Panc1 (cell line): ENCODE measurements at regions of chrX and their contacts with region 1.

Region 1: GRCh38 chrX:43557792-43558191 is 98.3 kb upstream of the MAOA start:
- DNase-seq: peak; percentile 25
- ATAC-seq: no peak
- H3K4me3 ChIP-seq: no peak overlapping the region
- H3K27ac ChIP-seq: no peak overlapping the region
- H3K4me1 ChIP-seq: no peaks in the 10 kb centered on the region
- H3K27me3 ChIP-seq: no peaks in the 10 kb centered on the region
- CTCF ChIP-seq: peak; percentile 62; the same call in 1 of the 2 replicates

Region 2: DNA sequence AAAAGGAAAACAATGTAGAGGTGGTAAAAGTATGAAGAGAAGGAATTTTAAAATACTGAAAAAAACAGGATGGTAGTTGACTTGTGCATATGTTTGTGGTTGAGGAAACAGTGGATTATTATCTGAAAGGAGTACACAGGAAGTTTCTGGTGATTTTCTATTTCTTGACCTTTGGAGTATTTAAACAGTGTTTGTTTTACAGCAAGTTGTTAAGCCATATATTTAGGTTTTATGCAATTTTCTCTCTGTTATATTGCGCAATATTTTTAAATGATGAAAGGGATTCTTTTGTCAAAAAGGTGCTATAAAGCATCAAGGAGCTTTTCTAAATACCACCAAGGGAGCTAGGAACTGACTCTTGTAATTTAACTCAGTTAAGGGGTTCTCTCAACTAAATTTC is 244.8 kb before region 1 on chrX:
- CTCF ChIA-PET with region 1: no interaction called
- POLR2A ChIA-PET with region 1: no interaction called
- in situ Hi-C with region 1: no loop called
- intact Hi-C with region 1: no loop called
- DNase-seq: no peak
- ATAC-seq: no peak
- H3K4me3 ChIP-seq: no peak overlapping the region
- H3K27ac ChIP-seq: no peak overlapping the region
- H3K4me1 ChIP-seq: no peaks in the 10 kb centered on the region
- H3K27me3 ChIP-seq: no peaks in the 10 kb centered on the region
- CTCF ChIP-seq: no peak

Region 3: DNA sequence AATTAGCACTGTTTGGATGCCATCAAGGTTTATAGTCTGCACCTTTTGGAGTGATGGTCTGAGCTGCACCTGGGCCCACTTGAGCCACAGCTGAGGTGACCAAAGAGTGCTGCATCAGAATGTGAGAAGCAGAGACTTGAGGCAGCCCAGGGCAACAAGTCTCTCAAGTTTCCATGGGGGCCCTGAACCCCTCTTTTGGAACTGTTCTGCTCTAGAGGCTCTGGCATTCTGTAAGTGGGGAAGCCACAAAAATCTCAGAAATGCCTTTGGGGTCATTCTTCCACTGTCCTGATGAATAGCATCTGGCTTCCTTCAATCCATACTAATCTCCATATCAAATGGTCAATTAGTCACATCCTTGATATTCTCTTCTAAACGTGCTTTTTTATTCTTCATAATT is 200.1 kb before region 1 on chrX:
- CTCF ChIA-PET with region 1: no interaction called
- POLR2A ChIA-PET with region 1: no interaction called
- in situ Hi-C with region 1: no loop called
- intact Hi-C with region 1: loop called (anchors 10 kb)
- DNase-seq: no peak
- ATAC-seq: no peak
- H3K4me3 ChIP-seq: no peak overlapping the region
- H3K27ac ChIP-seq: no peak overlapping the region
- H3K4me1 ChIP-seq: no peaks in the 10 kb centered on the region
- H3K27me3 ChIP-seq: no peaks in the 10 kb centered on the region
- CTCF ChIP-seq: no peak

Region 4: DNA sequence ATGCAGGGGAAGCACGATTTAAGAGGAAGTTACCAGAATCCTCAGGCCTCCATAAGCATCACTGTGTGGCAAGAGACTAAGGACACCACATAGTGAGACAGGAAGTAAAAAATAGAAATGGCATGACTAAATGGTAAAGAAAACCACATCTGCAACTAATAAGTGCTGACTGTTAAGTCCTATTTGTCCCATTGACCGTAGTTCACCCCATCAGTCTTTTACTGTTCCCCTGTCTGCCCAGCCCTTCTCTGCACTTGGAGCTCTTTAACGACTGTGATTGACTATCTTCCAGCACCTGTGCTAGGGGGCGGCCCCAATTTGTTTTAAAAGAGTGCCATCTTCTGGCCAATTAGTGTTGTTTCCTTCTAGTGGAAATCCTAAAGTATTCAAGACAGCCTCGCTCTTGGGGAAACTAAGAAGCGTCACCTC is 192.5 kb after region 1 on chrX:
- CTCF ChIA-PET with region 1: no interaction called
- POLR2A ChIA-PET with region 1: no interaction called
- in situ Hi-C with region 1: no loop called
- intact Hi-C with region 1: loop called (anchors 1 kb)
- DNase-seq: no peak
- ATAC-seq: peak; percentile 82; the same call in 1 of the 2 replicates
- H3K4me3 ChIP-seq: no peak overlapping the region
- H3K27ac ChIP-seq: no peak overlapping the region
- H3K4me1 ChIP-seq: no peaks in the 10 kb centered on the region
- H3K27me3 ChIP-seq: no peaks in the 10 kb centered on the region
- CTCF ChIP-seq: peak; percentile 55

Region 5: DNA sequence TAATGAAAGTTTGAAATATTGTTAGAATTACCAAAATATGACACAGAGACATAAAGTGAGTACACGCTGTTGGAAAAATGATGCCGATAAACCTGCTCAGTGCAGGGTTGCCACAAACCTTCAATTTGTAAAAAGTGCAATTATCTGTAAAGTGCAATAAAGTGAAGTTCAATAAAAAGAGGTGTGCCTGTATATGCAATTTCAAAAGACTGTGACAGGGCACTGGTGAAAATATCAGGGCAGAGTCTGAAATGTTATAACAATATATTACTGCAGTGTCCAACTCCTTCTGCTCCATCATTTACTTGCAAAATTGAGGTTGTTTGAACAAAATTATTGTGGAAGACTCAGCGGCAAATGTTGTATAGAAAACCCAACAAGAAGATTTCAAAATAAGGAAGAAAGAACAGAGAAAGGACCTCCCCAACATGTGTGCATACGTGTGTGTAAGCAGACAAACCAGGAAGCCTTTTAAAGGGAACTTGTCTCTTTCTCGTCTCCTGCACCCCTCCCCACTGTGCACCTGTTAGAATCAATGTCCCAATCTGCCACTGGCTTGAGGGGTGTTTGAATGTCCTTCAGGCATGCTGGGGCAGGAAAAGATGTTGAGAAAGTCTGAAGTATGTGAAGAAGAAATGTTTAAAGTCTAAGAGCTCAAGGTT is 228.3 kb after region 1 on chrX:
- CTCF ChIA-PET with region 1: no interaction called
- POLR2A ChIA-PET with region 1: no interaction called
- in situ Hi-C with region 1: no loop called
- intact Hi-C with region 1: no loop called
- DNase-seq: no peak
- ATAC-seq: no peak
- H3K4me3 ChIP-seq: no peak overlapping the region
- H3K27ac ChIP-seq: no peak overlapping the region
- H3K4me1 ChIP-seq: no peaks in the 10 kb centered on the region
- H3K27me3 ChIP-seq: no peaks in the 10 kb centered on the region
- CTCF ChIP-seq: no peak